Activated CD8-positive, alpha-beta memory T cell treated with anti-CD3 and anti-CD28 coated beads, Interleukin-2, amount 10 ng/mL, durations not matched to agents 7 days and 5 days (primary cell): ENCODE measurements at regions of chr1 and their contacts with region 1.

Region 1: GRCh38 chr1:110619412-110620249 is 13.5 kb upstream of the KCNA2 start:
- DNase-seq: peak; percentile 94
- ATAC-seq: peak; percentile 88
- H3K4me3 Mint-ChIP-seq: peak overlapping the region; percentile 77
- H3K27ac Mint-ChIP-seq: peak overlapping the region; percentile 93
- H3K4me1 Mint-ChIP-seq: peaks cover 48% of the 10 kb centered on the region
- H3K27me3 Mint-ChIP-seq: no peaks in the 10 kb centered on the region

Region 2: GRCh38 chr1:110524311-110525251 is 95.0 kb before region 1 on chr1:
- CTCF ChIA-PET with region 1: interaction called, 13 read pairs
- DNase-seq: peak; percentile 69
- ATAC-seq: peak; percentile 80
- H3K4me3 Mint-ChIP-seq: peak overlapping the region; percentile 30
- H3K27ac Mint-ChIP-seq: no peak overlapping the region
- H3K4me1 Mint-ChIP-seq: no peaks in the 10 kb centered on the region
- H3K27me3 Mint-ChIP-seq: peaks cover 52% of the 10 kb centered on the region

Region 3: GRCh38 chr1:110605901-110606656 is 13.6 kb before region 1 on chr1 and contains the start of gene KCNA2:
- CTCF ChIA-PET with region 1: interaction called, 21 read pairs
- DNase-seq: no peak
- ATAC-seq: peak; percentile 46
- H3K4me3 Mint-ChIP-seq: peak within 1 kb of the TSS; percentile 74
- H3K27ac Mint-ChIP-seq: no peak within 1 kb of the TSS
- H3K4me1 Mint-ChIP-seq: peaks cover 22% of the 10 kb centered on the region
- H3K27me3 Mint-ChIP-seq: peaks cover 42% of the 10 kb centered on the region
- total RNA-seq, gene KCNA2: 2.4 to 3.7 TPM

Region 4: GRCh38 chr1:110639724-110640386 is 20.2 kb after region 1 on chr1:
- CTCF ChIA-PET with region 1: interaction called, 16 read pairs
- DNase-seq: no peak
- ATAC-seq: no peak
- H3K4me3 Mint-ChIP-seq: no peak overlapping the region
- H3K27ac Mint-ChIP-seq: peak overlapping the region; percentile 30
- H3K4me1 Mint-ChIP-seq: peaks cover 71% of the 10 kb centered on the region
- H3K27me3 Mint-ChIP-seq: no peaks in the 10 kb centered on the region

Region 5: GRCh38 chr1:110663241-110663640 is 43.6 kb after region 1 on chr1:
- CTCF ChIA-PET with region 1: interaction called, 36 read pairs
- DNase-seq: no peak
- ATAC-seq: no peak
- H3K4me3 Mint-ChIP-seq: no peak overlapping the region
- H3K27ac Mint-ChIP-seq: no peak overlapping the region
- H3K4me1 Mint-ChIP-seq: peaks cover 36% of the 10 kb centered on the region
- H3K27me3 Mint-ChIP-seq: no peaks in the 10 kb centered on the region

Region 6: GRCh38 chr1:110674337-110675059 is 54.9 kb after region 1 on chr1 and contains the start of gene KCNA3:
- CTCF ChIA-PET with region 1: interaction called, 53 read pairs
- DNase-seq: peak; percentile 83
- ATAC-seq: peak; percentile 43
- H3K4me3 Mint-ChIP-seq: peak within 1 kb of the TSS; percentile 100
- H3K27ac Mint-ChIP-seq: peak within 1 kb of the TSS; percentile 96
- H3K4me1 Mint-ChIP-seq: peaks cover 14% of the 10 kb centered on the region
- H3K27me3 Mint-ChIP-seq: no peaks in the 10 kb centered on the region
- total RNA-seq, gene KCNA3: 59.8 to 95.2 TPM

Region 7: GRCh38 chr1:110780600-110781484 is 161.2 kb after region 1 on chr1:
- CTCF ChIA-PET with region 1: interaction called, 243 read pairs
- DNase-seq: peak; percentile 86
- ATAC-seq: peak; percentile 78
- H3K4me3 Mint-ChIP-seq: no peak overlapping the region
- H3K27ac Mint-ChIP-seq: no peak overlapping the region
- H3K4me1 Mint-ChIP-seq: peaks cover 32% of the 10 kb centered on the region
- H3K27me3 Mint-ChIP-seq: peaks cover 5% of the 10 kb centered on the region

Region 8: GRCh38 chr1:111015225-111015624 is 395.6 kb after region 1 on chr1:
- CTCF ChIA-PET with region 1: no interaction called
- DNase-seq: no peak
- ATAC-seq: no peak
- H3K4me3 Mint-ChIP-seq: no peak overlapping the region
- H3K27ac Mint-ChIP-seq: no peak overlapping the region
- H3K4me1 Mint-ChIP-seq: no peaks in the 10 kb centered on the region
- H3K27me3 Mint-ChIP-seq: peaks cover 46% of the 10 kb centered on the region